Heart right ventricle (tissue), 16 donors: ENCODE measurements at regions of chr13 and their contacts with region 1.

Region 1: DNA sequence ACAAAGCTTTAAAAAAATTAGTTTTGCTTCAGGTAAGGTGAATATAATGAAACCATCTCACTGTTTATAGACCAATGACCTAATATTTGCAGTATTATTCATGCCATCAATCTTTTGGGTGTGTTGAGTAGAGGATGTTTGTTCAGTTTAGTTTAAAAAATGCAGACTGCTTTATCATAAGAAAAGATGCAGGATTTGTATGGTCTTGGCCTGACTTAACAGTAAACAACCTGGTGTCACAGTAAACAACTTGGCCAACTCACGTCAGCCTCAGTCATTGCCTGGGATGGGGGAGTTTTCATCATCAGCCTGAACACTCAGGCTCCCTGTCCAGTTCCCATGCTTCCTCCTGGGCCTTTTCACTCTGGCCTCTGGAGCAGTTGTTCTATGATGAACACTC is 55.1 kb downstream of the LMO7 start:
- DNase-seq: no peak
- ATAC-seq: no peak
- H3K4me3 ChIP-seq: no peak overlapping the region
- H3K27ac ChIP-seq: no peak overlapping the region
- H3K4me1 ChIP-seq: peaks cover 0 to 4% (median 0%) of the 10 kb centered on the region in 9 donors
- H3K27me3 ChIP-seq: no peaks in the 10 kb centered on the region
- CTCF ChIP-seq: no peak

Region 2: DNA sequence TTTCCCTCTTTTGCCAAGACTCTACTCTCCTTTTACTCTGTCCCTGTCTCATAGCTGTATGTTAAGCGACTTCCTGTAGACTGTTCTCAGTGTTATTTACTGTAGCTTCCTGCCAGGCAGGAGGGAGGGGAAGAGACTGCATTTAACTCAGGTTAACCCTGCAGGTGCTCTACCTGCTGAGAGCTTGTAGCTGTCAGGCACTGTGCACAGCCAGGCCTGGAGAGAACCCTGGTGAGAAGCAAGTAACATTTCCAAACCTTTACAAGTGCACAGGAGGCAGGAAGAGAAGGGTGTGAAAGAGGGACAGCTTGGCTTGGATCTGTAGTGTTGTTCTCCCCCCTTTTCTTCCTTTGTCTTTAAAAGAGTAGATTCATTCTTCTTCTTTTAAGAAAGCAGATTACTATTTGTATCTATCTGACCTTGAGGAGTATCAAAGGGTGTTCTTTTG is 112.0 kb after region 1 on chr13:
- intact Hi-C with region 1: loop called in 5 of 10 experiments (anchors 2 to 10 kb)
- DNase-seq: no peak
- ATAC-seq: peak in 7 of 8 donors; percentile 8 to 51 (median 32)
- H3K4me3 ChIP-seq: no peak overlapping the region
- H3K27ac ChIP-seq: peak overlapping the region; percentile 53 to 94 (median 88)
- H3K4me1 ChIP-seq: peaks cover 0 to 46% (median 15%) of the 10 kb centered on the region in 9 donors
- H3K27me3 ChIP-seq: no peaks in the 10 kb centered on the region
- CTCF ChIP-seq: no peak

Region 3: GRCh38 chr13:75830842-75831241 is 139.7 kb after region 1 on chr13:
- intact Hi-C with region 1: loop called in 2 of 10 experiments (anchors 10 kb)
- DNase-seq: no peak
- ATAC-seq: no peak
- H3K4me3 ChIP-seq: no peak overlapping the region
- H3K27ac ChIP-seq: peak overlapping the region in 1 of 10 donors; percentile 5
- H3K4me1 ChIP-seq: peaks cover 0 to 65% (median 10%) of the 10 kb centered on the region in 9 donors
- H3K27me3 ChIP-seq: no peaks in the 10 kb centered on the region
- CTCF ChIP-seq: no peak

Region 4: DNA sequence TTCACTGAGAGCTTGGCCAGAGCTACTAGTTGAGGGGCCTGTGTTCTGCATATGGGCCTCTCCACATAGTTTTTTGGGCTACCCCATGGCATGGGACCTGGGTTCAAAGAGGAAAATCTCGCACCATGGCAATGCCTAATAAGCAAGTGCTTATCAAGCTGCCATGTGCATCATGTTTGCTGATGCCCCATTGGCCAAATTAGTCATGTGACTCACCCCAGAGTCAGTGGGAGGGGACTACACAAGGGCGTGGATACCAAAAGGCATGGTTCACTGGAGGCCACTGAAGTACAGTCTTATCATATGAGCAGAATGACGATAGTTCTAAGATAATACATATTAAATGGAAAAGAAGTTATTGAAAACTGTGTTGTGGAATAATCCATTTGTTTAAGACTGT is 159.7 kb after region 1 on chr13:
- intact Hi-C with region 1: loop called in 2 of 10 experiments (anchors 10 kb)
- DNase-seq: no peak
- ATAC-seq: peak in 3 of 8 donors; percentile 27 to 61 (median 39)
- H3K4me3 ChIP-seq: no peak overlapping the region
- H3K27ac ChIP-seq: no peak overlapping the region
- H3K4me1 ChIP-seq: peaks cover 0 to 18% (median 0%) of the 10 kb centered on the region in 9 donors
- H3K27me3 ChIP-seq: no peaks in the 10 kb centered on the region
- CTCF ChIP-seq: no peak

Region 5: DNA sequence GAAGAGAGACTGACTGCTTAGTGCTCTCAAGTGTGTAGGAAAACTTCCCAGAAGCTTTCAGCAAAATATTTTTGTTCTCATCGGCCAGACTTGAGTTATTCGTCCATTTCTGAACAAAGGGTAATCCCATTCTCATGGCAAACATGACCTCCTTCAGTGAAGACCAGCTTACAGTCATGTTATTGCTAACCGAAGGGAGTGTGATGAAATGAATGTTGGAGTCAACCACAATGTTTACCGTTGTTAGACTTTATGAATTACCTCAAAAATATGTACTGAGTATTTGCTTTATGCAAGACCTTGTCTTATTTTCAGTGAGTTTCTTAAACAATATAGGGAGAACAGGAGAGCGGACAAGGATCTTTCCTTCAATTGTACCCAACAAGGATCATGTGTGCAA is 173.5 kb after region 1 on chr13:
- intact Hi-C with region 1: loop called in 5 of 10 experiments (anchors 5 to 10 kb)
- DNase-seq: no peak
- ATAC-seq: no peak
- H3K4me3 ChIP-seq: no peak overlapping the region
- H3K27ac ChIP-seq: no peak overlapping the region
- H3K4me1 ChIP-seq: no peaks in the 10 kb centered on the region
- H3K27me3 ChIP-seq: peaks cover 0 to 4% (median 0%) of the 10 kb centered on the region in 7 donors
- CTCF ChIP-seq: no peak

Region 6: DNA sequence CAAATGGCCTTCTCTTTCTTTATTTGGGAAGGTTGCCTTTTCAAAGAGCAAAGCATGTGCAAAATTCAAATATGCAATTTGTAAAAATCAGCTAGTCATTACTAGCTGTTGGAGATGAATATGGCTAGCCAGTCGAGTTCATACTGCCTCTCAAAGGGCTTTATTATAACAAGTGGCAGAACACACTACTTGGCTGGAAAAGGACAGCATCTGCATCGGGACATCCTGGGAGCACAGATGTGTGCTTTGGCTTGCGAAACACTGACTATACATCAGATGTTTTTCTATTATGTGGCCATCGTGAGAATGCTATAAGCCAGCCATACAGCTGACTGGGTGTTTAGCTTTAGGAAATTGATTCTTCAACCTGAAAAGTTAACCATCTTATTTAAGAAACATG is 770.8 kb after region 1 on chr13:
- intact Hi-C with region 1: loop called in 1 of 10 experiments (anchors 5 kb)
- DNase-seq: no peak
- ATAC-seq: peak in 2 of 8 donors; percentile 39 to 42
- H3K4me3 ChIP-seq: no peak overlapping the region
- H3K27ac ChIP-seq: no peak overlapping the region
- H3K4me1 ChIP-seq: no peaks in the 10 kb centered on the region
- H3K27me3 ChIP-seq: no peaks in the 10 kb centered on the region
- CTCF ChIP-seq: no peak